Activated naive CD4-positive, alpha-beta T cell treated with anti-CD3 and anti-CD28 coated beads for 36 hours (primary cell): ENCODE measurements at regions of chr14 and their contacts with region 1.

Region 1: GRCh38 chr14:55354500-55354899 is 57.1 kb downstream of the ATG14 start:
- DNase-seq: peak; percentile 80
- H3K4me3 Mint-ChIP-seq: peak overlapping the region; percentile 20
- H3K27ac Mint-ChIP-seq: peak overlapping the region; percentile 74
- H3K4me1 Mint-ChIP-seq: peaks cover 21% of the 10 kb centered on the region
- H3K27me3 Mint-ChIP-seq: no peaks in the 10 kb centered on the region

Region 2: DNA sequence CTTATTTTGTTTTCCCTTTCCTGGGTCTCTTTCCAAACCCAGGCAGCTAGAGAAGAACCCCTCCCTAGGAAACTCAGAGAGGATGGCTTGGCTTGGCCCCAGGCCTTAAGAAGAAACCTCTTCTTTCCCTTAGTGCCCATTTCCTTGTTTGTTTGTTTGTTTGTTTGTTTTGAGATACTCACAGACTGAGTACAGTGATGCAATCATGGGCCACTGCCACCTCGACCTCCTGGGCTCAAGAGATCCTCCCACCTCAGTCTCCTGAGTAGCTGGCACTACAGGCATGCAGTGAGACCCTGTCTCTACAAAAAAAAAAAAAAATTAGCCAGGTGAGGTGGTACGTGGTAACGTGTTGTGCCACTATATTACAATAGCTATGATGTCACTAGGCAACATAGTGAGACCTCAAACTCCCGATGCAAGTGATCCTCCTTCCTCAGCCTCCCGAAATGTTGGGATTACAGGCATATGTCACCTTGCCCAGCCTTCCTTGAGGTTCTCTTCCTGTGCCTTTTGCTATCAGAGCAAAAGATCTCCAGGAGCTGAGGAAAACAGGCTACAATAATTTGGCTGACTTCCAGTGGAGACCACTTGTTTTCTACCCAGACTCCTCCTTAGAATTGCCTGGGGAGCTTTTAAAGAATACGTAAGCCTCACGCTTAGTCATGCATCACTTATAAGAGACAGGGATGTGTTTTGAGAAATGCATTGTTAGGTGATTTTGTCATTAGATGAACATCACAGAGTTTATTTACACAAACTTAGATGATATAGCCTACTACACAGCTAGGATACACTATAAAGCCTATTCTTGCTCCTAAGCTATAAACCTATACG is 260.0 kb before region 1 on chr14:
- CTCF ChIA-PET with region 1: no interaction called
- intact Hi-C with region 1: loop called (anchors 1 kb)
- DNase-seq: no peak
- H3K4me3 Mint-ChIP-seq: no peak overlapping the region
- H3K27ac Mint-ChIP-seq: no peak overlapping the region
- H3K4me1 Mint-ChIP-seq: peaks cover 17% of the 10 kb centered on the region
- H3K27me3 Mint-ChIP-seq: no peaks in the 10 kb centered on the region

Region 3: DNA sequence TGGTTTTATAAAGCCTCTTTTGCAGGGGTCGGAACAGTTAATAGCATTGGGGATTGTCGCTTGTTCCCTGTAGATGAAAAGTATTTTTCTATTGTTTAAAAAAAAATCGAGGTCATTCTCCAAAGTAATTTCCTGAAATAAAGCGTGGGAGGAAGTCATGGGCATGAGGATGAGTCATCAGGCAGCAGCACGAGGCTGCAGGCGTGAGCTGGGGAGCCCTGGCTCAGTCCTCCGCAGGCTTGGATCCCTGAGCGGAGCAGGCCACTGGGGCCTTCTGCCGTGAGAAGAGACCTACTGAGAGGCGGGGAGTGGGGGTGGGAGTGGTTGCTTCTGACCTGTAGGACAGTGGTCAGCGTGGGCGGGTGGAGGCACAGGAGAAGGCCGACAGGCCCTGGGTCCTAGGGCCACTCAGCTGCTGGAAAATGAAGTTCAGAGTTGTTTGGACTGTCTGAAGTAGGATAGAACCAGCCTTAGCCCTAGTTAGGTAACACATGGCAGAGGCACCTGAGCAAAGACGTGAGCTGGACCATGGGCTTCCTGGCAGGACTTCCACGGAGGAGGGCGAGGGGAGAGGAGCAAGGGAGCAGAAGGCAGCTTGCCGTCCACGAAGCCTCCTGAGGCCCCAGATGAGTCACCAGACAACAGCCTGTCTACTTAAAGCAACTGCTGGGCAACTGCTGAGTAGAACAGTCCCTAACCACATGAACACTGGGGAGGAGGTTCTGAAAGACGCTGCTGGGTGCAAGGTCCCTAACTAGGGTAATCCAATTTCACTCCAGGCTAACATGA is 246.5 kb before region 1 on chr14:
- CTCF ChIA-PET with region 1: no interaction called
- intact Hi-C with region 1: no loop called
- DNase-seq: peak; percentile 25
- H3K4me3 Mint-ChIP-seq: no peak overlapping the region
- H3K27ac Mint-ChIP-seq: no peak overlapping the region
- H3K4me1 Mint-ChIP-seq: peaks cover 21% of the 10 kb centered on the region
- H3K27me3 Mint-ChIP-seq: no peaks in the 10 kb centered on the region

Region 4: GRCh38 chr14:55212634-55213033 is 141.9 kb before region 1 on chr14:
- CTCF ChIA-PET with region 1: interaction called, 15 read pairs
- intact Hi-C with region 1: loop called (anchors 1 kb)
- DNase-seq: no peak
- H3K4me3 Mint-ChIP-seq: no peak overlapping the region
- H3K27ac Mint-ChIP-seq: no peak overlapping the region
- H3K4me1 Mint-ChIP-seq: peaks cover 4% of the 10 kb centered on the region
- H3K27me3 Mint-ChIP-seq: no peaks in the 10 kb centered on the region

Region 5: GRCh38 chr14:55265197-55265596 is 89.3 kb before region 1 on chr14:
- CTCF ChIA-PET with region 1: interaction called, 131 read pairs
- intact Hi-C with region 1: no loop called
- DNase-seq: peak; percentile 13
- H3K4me3 Mint-ChIP-seq: no peak overlapping the region
- H3K27ac Mint-ChIP-seq: no peak overlapping the region
- H3K4me1 Mint-ChIP-seq: peaks cover 4% of the 10 kb centered on the region
- H3K27me3 Mint-ChIP-seq: no peaks in the 10 kb centered on the region

Region 6: DNA sequence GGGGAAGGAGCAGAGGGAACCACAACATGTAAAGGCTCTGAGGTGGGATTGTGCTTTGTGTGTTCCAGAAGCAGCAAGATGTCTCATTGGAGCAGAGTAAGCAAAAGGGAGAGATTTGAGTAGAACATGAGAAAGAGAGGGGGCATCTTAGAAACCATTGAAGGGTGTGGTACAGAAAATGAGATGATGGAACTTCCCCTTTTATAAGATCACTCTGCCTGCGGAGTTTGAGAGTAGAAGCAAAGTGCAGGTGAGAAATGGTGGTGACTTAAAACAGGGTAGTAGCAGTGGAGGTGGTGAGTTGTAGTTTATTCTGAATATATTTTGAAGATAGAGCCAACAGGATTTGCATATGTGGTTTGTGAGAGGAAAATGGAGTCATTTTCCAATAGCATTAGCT is 27.3 kb before region 1 on chr14:
- CTCF ChIA-PET with region 1: interaction called, 31 read pairs
- intact Hi-C with region 1: no loop called
- DNase-seq: peak; percentile 16
- H3K4me3 Mint-ChIP-seq: no peak overlapping the region
- H3K27ac Mint-ChIP-seq: peak overlapping the region; percentile 42
- H3K4me1 Mint-ChIP-seq: peaks cover 65% of the 10 kb centered on the region
- H3K27me3 Mint-ChIP-seq: no peaks in the 10 kb centered on the region

Region 7: GRCh38 chr14:55366271-55366670 is 11.8 kb after region 1 on chr14:
- CTCF ChIA-PET with region 1: interaction called, 18 read pairs
- intact Hi-C with region 1: no loop called
- DNase-seq: no peak
- H3K4me3 Mint-ChIP-seq: no peak overlapping the region
- H3K27ac Mint-ChIP-seq: no peak overlapping the region
- H3K4me1 Mint-ChIP-seq: peaks cover 11% of the 10 kb centered on the region
- H3K27me3 Mint-ChIP-seq: no peaks in the 10 kb centered on the region

Region 8: GRCh38 chr14:55512421-55512820 is 157.9 kb after region 1 on chr14:
- CTCF ChIA-PET with region 1: no interaction called
- intact Hi-C with region 1: no loop called
- DNase-seq: no peak
- H3K4me3 Mint-ChIP-seq: no peak overlapping the region
- H3K27ac Mint-ChIP-seq: no peak overlapping the region
- H3K4me1 Mint-ChIP-seq: no peaks in the 10 kb centered on the region
- H3K27me3 Mint-ChIP-seq: no peaks in the 10 kb centered on the region